ENCODE measurements at regions of chr1 and their contacts with region 1.

Region 1: DNA sequence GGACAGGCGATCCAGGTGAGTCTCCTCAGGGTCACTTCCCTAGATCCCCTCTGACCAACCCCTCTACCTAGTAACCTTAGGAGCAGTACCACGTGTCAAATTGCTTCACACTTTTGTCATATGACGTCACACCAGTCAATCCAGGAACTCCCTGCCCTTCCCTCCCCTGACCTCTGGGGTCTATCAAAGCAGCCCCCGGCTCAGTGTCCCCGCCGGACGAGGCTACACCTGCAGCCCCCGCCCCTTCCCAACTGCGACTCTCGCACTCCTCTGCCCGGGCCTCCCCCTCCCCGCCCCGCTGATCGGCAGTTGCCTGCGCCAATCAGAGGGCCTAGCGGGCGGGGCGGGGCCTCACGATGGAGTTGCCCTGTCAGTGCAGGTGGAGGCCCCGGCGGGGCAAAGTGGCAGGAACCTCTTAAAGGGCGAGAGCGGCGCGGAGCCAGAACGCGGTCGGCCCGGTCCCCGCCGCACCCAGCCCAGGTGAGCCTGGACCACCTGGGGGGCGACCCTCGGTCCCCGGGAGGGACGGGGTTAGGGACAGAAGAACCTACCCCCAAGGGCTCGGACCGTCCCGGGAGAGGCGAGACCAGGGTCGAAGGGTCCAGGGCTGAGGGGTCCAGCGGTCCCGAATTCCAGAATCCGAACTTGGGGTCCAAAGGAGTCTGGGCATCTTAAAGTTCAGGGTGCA is 27.5 kb upstream of the EPB41 start:
- DNase-seq: peak; percentile 96 to 100 (median 99)
- ATAC-seq: peak; percentile 74
- H3K4me3 ChIP-seq: peak overlapping the region; percentile 81
- H3K27ac ChIP-seq: peak overlapping the region; percentile 87
- H3K4me1 ChIP-seq: peaks cover 63 to 87% of the 10 kb centered on the region in 2 experiments
- H3K27me3 ChIP-seq: no peaks in the 10 kb centered on the region
- CTCF ChIP-seq: no peak
- EP300 ChIP-seq: no peak
- POLR2A ChIP-seq: peak; percentile 82
- RAD21 ChIP-seq: no peak

Region 2: DNA sequence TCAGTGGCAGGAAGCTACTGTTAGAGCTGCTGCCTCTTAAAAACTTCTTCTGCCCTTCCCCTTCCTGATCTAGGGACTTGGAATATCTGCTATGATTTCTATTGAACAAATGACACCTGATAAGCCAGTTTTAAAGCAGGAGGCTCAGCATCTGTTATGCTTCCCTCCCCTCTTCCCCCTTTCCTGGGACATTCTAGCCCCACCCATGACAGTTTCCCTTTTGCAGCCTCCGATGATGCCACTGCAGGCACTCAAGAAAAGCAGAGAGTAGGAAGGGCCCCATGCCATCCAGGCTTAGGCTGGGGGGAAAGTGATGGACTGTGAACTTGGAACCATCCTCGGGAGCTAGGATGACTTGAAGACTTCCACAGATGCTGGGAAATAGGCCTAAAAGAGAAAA is 12.4 kb after region 1 on chr1:
- CTCF ChIA-PET with region 1: no interaction called
- POLR2A ChIA-PET with region 1: interaction called, 15 read pairs
- in situ Hi-C with region 1: no loop called
- intact Hi-C with region 1: no loop called
- DNase-seq: no peak
- ATAC-seq: no peak
- H3K4me3 ChIP-seq: no peak overlapping the region
- H3K27ac ChIP-seq: no peak overlapping the region
- H3K4me1 ChIP-seq: peaks cover 41 to 43% of the 10 kb centered on the region in 2 experiments
- H3K27me3 ChIP-seq: no peaks in the 10 kb centered on the region
- CTCF ChIP-seq: no peak
- EP300 ChIP-seq: no peak
- POLR2A ChIP-seq: no peak
- RAD21 ChIP-seq: no peak

Region 3: DNA sequence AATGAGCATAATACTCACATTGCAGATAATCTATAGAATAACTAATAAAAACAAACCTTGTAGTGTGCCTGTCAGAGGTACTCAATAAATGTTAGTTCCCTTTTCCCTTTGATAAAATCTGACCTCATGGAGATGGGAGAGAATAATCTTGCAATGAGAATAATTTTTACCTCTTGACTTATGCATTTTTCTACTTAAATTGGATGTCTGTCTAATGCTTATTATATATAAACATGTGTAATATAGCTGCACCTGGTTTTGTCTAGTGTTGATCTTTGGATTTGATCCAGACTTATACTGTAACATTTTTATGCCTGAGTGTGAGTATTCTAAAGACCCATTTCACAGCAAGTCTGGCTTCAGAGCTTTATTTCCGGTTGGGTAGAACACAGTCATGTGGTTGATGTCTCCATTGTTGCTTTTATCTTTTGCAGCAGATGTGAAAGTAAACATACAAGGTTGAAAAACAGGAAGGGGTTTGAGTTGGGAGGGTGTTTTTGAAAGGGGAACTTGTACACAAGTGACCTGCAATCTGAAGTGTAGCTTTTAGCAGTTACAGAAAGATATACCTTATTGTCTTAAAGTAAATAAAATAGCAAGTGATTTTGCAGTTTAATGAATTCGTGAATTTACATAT is 39.9 kb after region 1 on chr1:
- CTCF ChIA-PET with region 1: interaction called, 3 read pairs
- POLR2A ChIA-PET with region 1: interaction called, 8 read pairs
- in situ Hi-C with region 1: no loop called
- intact Hi-C with region 1: loop called (anchors 1 kb)
- DNase-seq: peak; percentile 56 to 91 (median 72)
- ATAC-seq: peak; percentile 89
- H3K4me3 ChIP-seq: no peak overlapping the region
- H3K27ac ChIP-seq: peak overlapping the region; percentile 86
- H3K4me1 ChIP-seq: peaks cover 30 to 34% of the 10 kb centered on the region in 2 experiments; a peak in 4 of 5 replicates
- H3K27me3 ChIP-seq: no peaks in the 10 kb centered on the region
- CTCF ChIP-seq: no peak
- EP300 ChIP-seq: peak; percentile 99
- POLR2A ChIP-seq: no peak; the same call in 1 of the 2 replicates
- RAD21 ChIP-seq: peak in 1 of 2 experiments; percentile 20; a peak in 2 of 4 replicates

Region 4: DNA sequence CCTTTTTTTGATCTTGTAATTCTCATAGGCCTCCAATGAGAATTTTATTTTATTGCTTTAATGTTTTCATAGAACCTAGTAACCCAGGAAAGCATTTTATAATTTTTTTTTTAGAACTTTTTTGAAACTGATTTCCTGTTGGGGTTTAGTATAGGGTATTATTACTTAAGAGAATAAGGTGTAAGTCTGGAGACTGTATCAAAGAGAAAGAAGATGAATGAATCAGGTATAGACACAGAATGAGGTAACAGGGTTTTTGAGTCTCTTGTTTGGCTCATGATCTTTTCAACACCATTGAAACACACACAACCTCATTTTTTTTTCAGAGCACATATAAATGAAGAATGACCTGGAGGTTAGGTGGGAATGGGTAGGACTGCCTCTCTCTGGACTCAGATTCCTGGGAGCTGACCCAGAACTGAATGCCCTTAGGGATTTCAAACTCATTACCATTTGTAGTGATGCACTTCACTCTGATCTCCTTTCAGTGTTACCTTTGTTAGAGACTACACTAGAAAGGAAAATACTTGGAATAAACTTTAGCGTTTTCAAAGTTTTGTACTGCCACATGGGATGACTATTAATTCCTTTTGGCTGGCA is 78.5 kb after region 1 on chr1:
- CTCF ChIA-PET with region 1: no interaction called
- POLR2A ChIA-PET with region 1: no interaction called
- in situ Hi-C with region 1: no loop called
- intact Hi-C with region 1: no loop called
- DNase-seq: no peak
- ATAC-seq: no peak
- H3K4me3 ChIP-seq: no peak overlapping the region
- H3K27ac ChIP-seq: no peak overlapping the region
- H3K4me1 ChIP-seq: peaks cover 0 to 2% of the 10 kb centered on the region in 2 experiments; a peak in 2 of 5 replicates
- H3K27me3 ChIP-seq: no peaks in the 10 kb centered on the region
- CTCF ChIP-seq: no peak
- EP300 ChIP-seq: no peak
- POLR2A ChIP-seq: no peak
- RAD21 ChIP-seq: no peak

Region 5: DNA sequence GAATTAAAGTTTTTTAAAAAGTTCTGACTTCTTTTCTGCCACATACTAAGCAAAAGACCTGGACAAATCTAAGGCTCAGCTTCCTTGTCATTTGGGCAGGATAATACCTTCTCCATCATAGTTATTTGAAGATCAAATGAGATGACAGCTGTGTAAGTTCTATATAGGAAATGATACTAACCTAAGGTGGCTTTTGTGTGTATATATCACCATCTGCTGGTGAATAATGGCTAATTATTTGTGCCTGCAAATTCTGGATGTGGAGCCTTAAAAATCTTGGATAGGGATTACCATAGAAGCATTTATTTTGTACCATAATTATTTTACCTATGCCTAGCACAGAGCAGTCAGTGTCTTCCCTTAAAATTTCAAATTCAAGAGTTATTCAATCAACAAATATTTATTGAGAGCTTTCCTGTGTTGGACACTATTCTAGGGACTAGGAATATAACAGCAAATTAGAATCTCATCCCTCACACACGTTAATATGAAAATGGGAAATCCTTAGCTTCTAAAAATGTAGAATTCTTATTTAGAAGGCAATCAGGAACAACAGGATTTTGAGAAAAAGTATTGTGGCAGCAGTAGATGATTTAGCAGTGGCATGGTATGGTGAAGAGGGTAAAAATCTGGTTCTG is 147.1 kb after region 1 on chr1:
- CTCF ChIA-PET with region 1: interaction called, 61 read pairs
- POLR2A ChIA-PET with region 1: interaction called, 68 read pairs
- in situ Hi-C with region 1: loop called (anchors 5 kb)
- intact Hi-C with region 1: loop called (anchors 1 kb)
- DNase-seq: peak; percentile 46 to 63 (median 51)
- ATAC-seq: peak; percentile 75
- H3K4me3 ChIP-seq: no peak overlapping the region
- H3K27ac ChIP-seq: no peak overlapping the region; the same call in 2 of the 3 replicates
- H3K4me1 ChIP-seq: peaks cover 4 to 20% of the 10 kb centered on the region in 2 experiments
- H3K27me3 ChIP-seq: no peaks in the 10 kb centered on the region
- CTCF ChIP-seq: peak; percentile 55 to 86 (median 68); a peak in 4 of 6 replicates
- EP300 ChIP-seq: no peak
- POLR2A ChIP-seq: no peak
- RAD21 ChIP-seq: peak; percentile 94 to 97

Region 6: DNA sequence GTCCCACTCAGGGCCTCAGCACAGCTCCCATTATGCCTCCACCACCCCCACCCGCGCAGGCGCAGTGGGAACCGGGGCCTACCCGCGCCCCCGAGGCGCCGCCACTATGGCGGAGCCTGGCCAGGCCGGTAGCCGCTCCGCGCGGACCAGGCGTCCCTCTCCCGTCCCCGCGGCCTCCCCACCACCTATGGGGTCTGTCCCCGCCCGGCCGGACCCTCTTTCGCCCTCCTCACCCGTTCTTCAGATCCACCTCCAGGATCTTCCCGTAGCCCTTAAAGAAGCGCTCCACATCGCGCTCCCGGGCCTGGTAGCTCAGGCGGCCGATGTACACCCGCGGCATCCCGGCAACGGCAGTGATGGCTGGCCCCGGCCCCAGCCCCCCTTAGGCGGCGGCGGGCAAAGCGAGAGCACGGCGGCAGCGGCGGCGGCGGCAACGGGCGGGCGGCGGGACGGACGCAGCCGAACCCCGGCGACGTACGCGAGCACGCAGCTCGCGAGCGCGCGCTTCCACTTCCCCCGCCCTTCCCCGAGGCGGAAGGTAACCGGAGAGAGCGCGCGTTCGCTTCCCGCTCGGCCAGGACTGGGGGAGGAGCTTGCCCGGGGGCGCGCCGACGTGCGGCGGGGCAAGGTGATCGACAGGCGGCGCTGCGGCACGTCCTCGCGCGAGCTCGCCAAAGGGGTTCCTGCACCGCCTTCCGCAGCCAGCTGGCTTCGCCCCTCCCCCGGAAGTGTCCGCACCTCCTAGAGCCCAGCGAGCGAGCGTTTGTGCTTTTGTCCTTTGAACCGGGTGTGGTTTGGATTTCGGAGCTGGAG is 294.7 kb after region 1 on chr1 and contains the start of gene SRSF4:
- CTCF ChIA-PET with region 1: interaction called, 5 read pairs
- POLR2A ChIA-PET with region 1: interaction called, 14 read pairs
- in situ Hi-C with region 1: no loop called
- intact Hi-C with region 1: loop called (anchors 1 kb)
- DNase-seq: peak; percentile 98 to 100 (median 98)
- ATAC-seq: peak; percentile 92
- H3K4me3 ChIP-seq: peak within 1 kb of the TSS; percentile 95
- H3K27ac ChIP-seq: peak within 1 kb of the TSS; percentile 100
- H3K4me1 ChIP-seq: peaks cover 20 to 32% of the 10 kb centered on the region in 2 experiments
- H3K27me3 ChIP-seq: no peaks in the 10 kb centered on the region
- CTCF ChIP-seq: peak; percentile 94 to 98 (median 95)
- EP300 ChIP-seq: peak; percentile 50; the same call in 1 of the 2 replicates
- POLR2A ChIP-seq: peak; percentile 94
- RAD21 ChIP-seq: peak; percentile 51 to 70
- polyA plus RNA-seq, gene SRSF4: 15.9 to 18.4 TPM

Region 7: DNA sequence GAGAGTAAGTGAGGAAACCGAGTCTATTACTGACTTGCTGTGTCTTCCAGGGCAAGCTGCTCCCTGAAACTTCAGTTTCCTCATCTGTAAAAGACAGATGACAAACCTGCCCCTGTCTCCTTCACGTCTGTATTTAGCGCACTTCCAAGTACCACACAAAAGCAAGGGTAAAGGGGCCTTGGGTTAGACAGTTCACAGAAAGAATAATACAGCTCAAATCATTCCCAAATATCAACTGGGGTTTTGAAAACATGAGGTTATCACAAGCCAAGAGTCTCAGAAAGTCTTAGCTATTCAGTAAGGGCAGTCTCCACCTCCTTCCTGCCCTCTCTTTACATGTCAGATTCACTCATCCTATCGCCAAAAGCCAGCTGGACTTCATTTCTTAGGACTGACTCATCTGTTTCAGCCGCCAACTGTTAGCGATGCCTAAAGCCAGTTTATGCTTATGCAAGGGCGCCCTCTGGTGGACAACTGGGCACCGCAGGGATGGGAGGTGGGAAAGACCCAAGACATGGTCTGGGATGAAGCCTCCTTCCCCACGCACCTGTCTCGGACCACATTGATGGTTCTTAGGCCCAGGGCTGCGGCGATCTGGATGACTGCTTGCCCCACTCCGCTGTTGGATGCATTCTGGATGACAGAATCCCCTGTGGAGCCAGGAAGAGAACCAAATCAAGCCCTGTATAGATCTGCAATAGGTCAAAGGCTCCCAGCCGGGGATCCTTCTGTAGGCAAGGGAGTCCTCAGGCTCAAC is 315.9 kb after region 1 on chr1:
- CTCF ChIA-PET with region 1: interaction called, 35 read pairs
- POLR2A ChIA-PET with region 1: interaction called, 17 read pairs
- in situ Hi-C with region 1: loop called (anchors 5 kb)
- intact Hi-C with region 1: loop called (anchors 1 kb)
- DNase-seq: peak; percentile 95 to 99 (median 96)
- ATAC-seq: peak; percentile 99
- H3K4me3 ChIP-seq: no peak overlapping the region
- H3K27ac ChIP-seq: peak overlapping the region; percentile 78
- H3K4me1 ChIP-seq: peaks cover 22 to 27% of the 10 kb centered on the region in 2 experiments
- H3K27me3 ChIP-seq: no peaks in the 10 kb centered on the region
- CTCF ChIP-seq: peak; percentile 94 to 99 (median 99)
- EP300 ChIP-seq: peak; percentile 92
- POLR2A ChIP-seq: no peak
- RAD21 ChIP-seq: peak; percentile 99